Panc1 (cell line): ENCODE measurements at regions of chr19 and their contacts with region 1.

Region 1: DNA sequence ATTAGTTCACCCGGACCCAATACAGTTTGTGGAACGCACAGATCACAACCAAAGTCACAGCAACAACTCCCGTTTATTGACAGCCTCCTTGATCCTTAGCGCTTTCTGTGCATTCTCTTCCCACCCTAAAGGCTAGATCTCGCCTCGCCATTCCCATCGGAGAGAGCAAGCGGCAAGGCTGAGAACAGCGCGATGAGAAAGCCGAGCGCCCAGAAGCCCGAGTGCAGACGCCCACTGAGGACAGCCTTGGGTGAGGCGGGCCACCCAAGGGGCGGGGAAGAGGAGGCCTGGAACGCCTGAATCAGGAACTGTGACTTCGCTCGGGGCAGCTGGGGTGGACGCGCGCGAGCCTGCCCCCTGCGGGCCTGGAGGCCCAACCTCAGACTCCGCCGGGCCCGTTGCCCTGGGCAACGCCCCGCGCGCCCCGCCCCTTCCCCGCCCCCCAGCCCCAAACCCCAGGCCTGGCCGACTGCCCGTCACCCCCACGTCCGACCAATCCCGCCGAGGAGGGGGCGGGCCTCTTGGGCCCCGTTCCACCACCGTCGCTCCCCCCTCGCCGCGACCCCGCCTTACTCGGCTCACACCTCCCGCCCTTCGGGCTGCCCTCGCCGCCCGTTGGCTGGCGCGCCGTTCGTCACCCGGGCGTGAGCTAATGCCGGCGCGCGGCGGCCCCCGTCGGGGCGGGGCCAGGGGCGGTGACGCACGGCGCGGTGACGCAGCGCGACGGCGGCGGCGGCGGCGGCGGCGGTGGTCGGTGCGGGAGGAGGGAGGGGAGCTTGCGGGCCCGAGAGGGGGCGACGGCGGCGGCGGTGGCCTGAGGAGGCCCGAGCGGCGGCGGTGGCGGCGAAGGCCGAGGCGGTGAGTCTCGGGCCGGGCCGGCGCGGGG is at the start of gene SAMD4B:
- DNase-seq: peak; percentile 100
- ATAC-seq: peak; percentile 94
- H3K4me3 ChIP-seq: peak within 1 kb of the TSS; percentile 39 to 60
- H3K27ac ChIP-seq: peak within 1 kb of the TSS; percentile 88
- H3K4me1 ChIP-seq: peaks cover 40% of the 10 kb centered on the region
- H3K27me3 ChIP-seq: no peaks in the 10 kb centered on the region
- CTCF ChIP-seq: no peak
- total RNA-seq, gene SAMD4B: 1,339 TPM

Region 2: DNA sequence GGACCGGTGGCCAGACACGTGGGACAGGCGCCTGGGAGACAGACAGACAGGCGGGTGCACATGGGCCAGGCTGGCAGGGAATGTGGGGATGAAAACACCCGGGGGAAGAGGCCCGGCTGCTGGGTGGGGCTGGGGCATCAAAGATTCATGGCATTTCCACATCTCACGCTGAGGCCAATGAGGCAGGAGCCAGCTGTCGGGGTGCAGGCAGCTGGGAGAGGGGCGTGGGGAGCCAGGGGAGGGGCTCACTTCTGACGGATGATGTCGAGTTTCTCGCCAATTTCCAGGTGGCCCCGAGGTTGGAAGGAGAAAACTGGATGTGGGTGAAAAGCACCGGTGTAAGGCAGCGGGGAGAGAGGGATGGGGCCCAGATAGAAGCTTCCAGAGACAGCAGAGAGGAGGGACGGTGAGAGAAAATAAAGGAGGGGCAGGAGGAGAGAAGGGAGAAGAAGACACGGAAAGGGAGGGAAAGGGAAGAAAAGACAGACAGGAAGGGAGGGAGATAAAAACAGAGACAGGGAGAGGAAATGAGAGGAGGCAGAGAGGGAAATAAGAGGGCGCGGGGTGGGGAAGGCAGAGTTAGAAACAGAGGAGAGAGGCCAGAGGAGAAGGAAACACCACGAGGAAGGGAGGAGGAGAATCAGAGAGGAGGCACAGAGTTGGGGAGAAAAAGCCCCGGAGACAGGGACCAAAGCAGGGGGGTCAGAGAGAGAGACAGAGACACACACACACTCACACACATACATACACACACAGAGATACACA is 421.9 kb before region 1 on chr19:
- CTCF ChIA-PET with region 1: no interaction called
- POLR2A ChIA-PET with region 1: no interaction called
- in situ Hi-C with region 1: no loop called
- intact Hi-C with region 1: no loop called
- DNase-seq: no peak
- ATAC-seq: no peak
- H3K4me3 ChIP-seq: no peak overlapping the region
- H3K27ac ChIP-seq: no peak overlapping the region
- H3K4me1 ChIP-seq: peaks cover 11% of the 10 kb centered on the region
- H3K27me3 ChIP-seq: no peaks in the 10 kb centered on the region
- CTCF ChIP-seq: no peak

Region 3: DNA sequence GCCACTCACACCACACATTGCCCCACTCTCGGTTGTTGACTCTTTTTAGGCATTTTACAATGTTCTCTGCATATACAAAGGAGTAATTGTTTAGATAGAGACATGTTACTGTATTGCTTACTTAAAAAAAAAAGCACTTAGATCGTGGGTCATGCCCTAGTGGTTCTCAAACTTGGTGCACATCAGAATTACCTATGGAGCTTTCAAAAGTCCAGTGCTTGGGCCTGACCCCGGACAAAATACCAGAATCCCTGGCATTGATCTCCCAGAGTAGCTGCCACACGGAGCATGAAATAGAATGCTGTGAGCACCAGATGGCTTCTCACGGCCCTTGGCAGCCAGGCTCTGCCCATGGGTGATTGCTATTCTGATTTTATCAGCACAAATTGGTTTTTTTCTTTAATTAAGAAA is 237.8 kb before region 1 on chr19:
- CTCF ChIA-PET with region 1: no interaction called
- POLR2A ChIA-PET with region 1: no interaction called
- in situ Hi-C with region 1: no loop called
- intact Hi-C with region 1: no loop called
- DNase-seq: no peak
- ATAC-seq: no peak
- H3K4me3 ChIP-seq: no peak overlapping the region
- H3K27ac ChIP-seq: no peak overlapping the region
- H3K4me1 ChIP-seq: peaks cover 8% of the 10 kb centered on the region
- H3K27me3 ChIP-seq: no peaks in the 10 kb centered on the region
- CTCF ChIP-seq: no peak

Region 4: DNA sequence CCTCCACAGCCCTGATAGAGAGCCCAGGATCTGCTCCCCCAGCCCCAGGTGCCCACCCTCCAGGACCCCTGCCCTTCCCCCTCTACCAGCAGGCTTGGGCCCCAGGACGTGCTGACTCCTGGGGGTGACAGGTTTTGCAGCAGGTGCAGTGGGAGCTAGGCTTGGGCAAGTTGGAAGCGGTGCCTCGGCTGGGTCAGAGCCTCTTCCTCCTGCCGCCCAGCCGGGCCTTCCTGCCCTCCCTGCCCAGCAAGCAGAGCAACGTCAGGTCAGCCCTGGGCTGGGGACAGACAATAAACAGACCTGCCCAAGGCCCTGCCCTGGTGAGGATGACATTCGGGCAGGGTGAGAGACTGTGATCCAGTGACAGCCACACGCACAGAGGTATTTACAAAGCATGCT is 154.4 kb before region 1 on chr19:
- CTCF ChIA-PET with region 1: no interaction called
- POLR2A ChIA-PET with region 1: no interaction called
- in situ Hi-C with region 1: no loop called
- intact Hi-C with region 1: no loop called
- DNase-seq: no peak
- ATAC-seq: peak; percentile 40
- H3K4me3 ChIP-seq: no peak overlapping the region
- H3K27ac ChIP-seq: no peak overlapping the region
- H3K4me1 ChIP-seq: no peaks in the 10 kb centered on the region; the same call in 1 of the 2 replicates
- H3K27me3 ChIP-seq: no peaks in the 10 kb centered on the region
- CTCF ChIP-seq: no peak

Region 5: DNA sequence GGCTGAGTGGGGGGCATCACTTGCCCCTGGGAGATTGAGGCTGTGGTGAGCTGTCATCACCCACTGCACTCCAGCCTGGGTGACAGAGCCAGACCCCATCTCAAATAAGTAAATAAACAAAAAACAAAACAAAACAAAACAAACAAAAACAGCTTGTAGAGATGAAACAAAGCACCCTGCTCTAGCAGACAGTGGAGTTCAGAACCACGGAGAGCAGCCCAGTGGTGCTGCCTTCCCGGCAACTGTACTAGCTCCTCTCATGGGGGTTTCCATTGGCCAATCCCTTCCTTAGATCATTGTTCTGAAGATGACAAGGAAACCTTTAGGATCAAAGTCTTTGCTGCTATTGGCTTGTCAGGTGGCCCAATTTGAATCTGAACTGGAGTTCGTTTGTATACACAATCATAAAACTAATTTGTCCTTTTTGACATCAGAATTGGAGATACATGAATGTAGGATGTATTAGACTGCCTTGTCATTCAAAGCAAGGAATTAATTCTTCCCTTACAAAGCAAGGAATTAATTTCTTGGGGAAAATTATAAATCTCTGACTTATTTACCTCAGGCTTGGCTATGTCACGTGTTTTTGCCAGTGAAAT is 118.2 kb before region 1 on chr19:
- CTCF ChIA-PET with region 1: interaction called, 3 read pairs
- POLR2A ChIA-PET with region 1: interaction called, 14 read pairs
- in situ Hi-C with region 1: loop called (anchors 5 kb)
- intact Hi-C with region 1: no loop called
- DNase-seq: no peak
- ATAC-seq: peak; percentile 40; the same call in 1 of the 2 replicates
- H3K4me3 ChIP-seq: no peak overlapping the region
- H3K27ac ChIP-seq: no peak overlapping the region
- H3K4me1 ChIP-seq: no peaks in the 10 kb centered on the region
- H3K27me3 ChIP-seq: peaks cover 17% of the 10 kb centered on the region
- CTCF ChIP-seq: no peak

Region 6: DNA sequence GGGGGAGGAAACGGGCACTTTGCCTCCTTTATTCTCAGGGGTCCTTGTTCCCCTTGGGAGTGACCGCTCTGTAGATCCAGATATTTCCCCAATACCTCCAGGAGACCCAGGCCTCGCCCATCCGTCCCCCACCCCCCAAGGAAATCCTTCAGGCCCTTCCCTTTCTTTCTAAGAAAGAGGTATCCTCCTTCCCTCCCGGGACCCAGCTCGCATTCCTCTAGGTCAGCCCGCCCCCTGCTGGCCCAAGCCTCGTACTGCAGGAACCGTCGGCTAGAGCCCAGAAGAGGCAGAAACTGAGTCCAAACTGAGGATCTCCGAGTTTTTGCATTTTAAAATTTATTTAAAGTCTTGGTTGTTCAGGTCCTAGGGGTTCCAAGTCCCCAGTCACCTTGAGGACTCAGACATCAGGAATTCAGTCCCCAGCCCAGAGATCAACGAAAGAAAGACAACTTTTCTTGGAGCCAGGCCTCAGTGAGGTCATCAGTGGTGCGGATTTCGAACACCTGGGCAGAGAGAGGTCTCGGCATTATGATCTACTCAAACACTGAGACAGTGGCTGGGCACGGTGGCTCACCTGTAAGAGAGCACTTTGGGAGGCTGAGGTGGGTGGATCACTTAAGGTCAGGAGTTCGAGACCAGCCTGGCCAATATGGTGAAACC is 13.8 kb before region 1 on chr19:
- CTCF ChIA-PET with region 1: interaction called, 58 read pairs
- POLR2A ChIA-PET with region 1: interaction called, 8 read pairs
- in situ Hi-C with region 1: no loop called
- intact Hi-C with region 1: no loop called
- DNase-seq: peak; percentile 97
- ATAC-seq: peak; percentile 84
- H3K4me3 ChIP-seq: no peak overlapping the region
- H3K27ac ChIP-seq: peak overlapping the region; percentile 2
- H3K4me1 ChIP-seq: peaks cover 7% of the 10 kb centered on the region; the same call in 1 of the 2 replicates
- H3K27me3 ChIP-seq: no peaks in the 10 kb centered on the region
- CTCF ChIP-seq: no peak

Region 7: GRCh38 chr19:39381910-39382611 is 40.1 kb after region 1 on chr19:
- CTCF ChIA-PET with region 1: interaction called, 4 read pairs
- POLR2A ChIA-PET with region 1: interaction called, 13 read pairs
- in situ Hi-C with region 1: no loop called
- intact Hi-C with region 1: no loop called
- DNase-seq: no peak
- ATAC-seq: 0 out of 2 replicates have a peak, but pooled peaks have one; percentile 4
- H3K4me3 ChIP-seq: no peak overlapping the region
- H3K27ac ChIP-seq: no peak overlapping the region
- H3K4me1 ChIP-seq: peaks cover 21% of the 10 kb centered on the region
- H3K27me3 ChIP-seq: no peaks in the 10 kb centered on the region
- CTCF ChIP-seq: no peak

Region 8: GRCh38 chr19:39406656-39407393 is 64.9 kb after region 1 on chr19 and contains the start of gene ZFP36:
- CTCF ChIA-PET with region 1: interaction called, 18 read pairs
- POLR2A ChIA-PET with region 1: interaction called, 57 read pairs
- in situ Hi-C with region 1: no loop called
- intact Hi-C with region 1: loop called (anchors 1 kb)
- DNase-seq: peak; percentile 100
- ATAC-seq: peak; percentile 37
- H3K4me3 ChIP-seq: peak within 1 kb of the TSS; percentile 42 to 55
- H3K27ac ChIP-seq: peak within 1 kb of the TSS; percentile 92
- H3K4me1 ChIP-seq: peaks cover 76% of the 10 kb centered on the region
- H3K27me3 ChIP-seq: no peaks in the 10 kb centered on the region
- CTCF ChIP-seq: no peak
- total RNA-seq, gene ZFP36: 414 TPM

Region 9: DNA sequence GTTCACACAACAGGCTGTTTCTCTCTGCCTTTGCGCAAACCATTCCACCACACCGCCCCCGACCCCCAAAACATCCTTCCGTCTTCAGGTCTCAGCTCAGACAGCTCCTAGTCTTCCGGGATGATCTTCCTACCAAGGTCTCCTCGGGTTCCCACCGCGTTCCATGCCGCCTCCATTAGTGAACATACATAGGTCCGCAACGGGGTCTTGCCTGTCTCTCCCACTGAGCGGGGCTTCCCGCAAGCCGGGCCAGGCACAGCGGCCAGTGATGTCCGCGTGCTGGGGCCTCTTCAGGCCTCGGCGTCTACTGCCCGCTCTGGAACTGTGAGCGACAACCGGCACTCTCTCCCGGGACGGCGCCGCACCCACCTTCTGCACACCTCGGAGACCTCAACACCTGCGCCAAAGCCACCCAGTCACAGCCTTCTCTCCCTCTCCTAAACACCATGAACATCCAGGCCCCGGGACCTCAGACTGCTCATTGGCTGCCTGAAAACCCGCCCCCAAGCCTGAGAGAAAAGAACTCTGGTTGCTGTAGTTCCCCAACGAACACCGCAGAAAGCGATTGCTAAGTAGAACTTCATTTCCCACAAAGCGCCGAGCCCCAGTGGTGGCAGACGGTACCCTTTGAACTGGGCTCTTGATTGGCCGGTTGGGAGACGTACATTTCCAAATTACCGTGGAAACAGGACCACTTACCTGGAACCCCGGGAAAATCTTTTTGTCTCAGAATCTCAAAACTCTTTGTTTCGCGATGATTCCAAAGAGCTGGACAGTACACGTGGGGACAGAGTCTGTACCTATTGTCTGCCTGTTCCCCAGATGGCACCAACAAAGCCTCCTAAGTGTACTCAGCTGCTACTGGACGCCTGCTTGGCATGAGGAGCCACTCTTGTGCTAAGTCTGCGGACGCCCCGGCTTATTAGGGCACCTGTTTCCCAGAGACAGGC is 482.5 kb after region 1 on chr19:
- CTCF ChIA-PET with region 1: no interaction called
- POLR2A ChIA-PET with region 1: interaction called, 12 read pairs
- in situ Hi-C with region 1: no loop called
- intact Hi-C with region 1: no loop called
- DNase-seq: peak; percentile 100
- ATAC-seq: peak; percentile 97
- H3K4me3 ChIP-seq: peak overlapping the region; percentile 37 to 51
- H3K27ac ChIP-seq: peak overlapping the region; percentile 78
- H3K4me1 ChIP-seq: peaks cover 22% of the 10 kb centered on the region
- H3K27me3 ChIP-seq: no peaks in the 10 kb centered on the region
- CTCF ChIP-seq: no peak